Mammary epithelial cell (primary cell): ENCODE measurements at regions of chr9 and their contacts with region 1.

Region 1: DNA sequence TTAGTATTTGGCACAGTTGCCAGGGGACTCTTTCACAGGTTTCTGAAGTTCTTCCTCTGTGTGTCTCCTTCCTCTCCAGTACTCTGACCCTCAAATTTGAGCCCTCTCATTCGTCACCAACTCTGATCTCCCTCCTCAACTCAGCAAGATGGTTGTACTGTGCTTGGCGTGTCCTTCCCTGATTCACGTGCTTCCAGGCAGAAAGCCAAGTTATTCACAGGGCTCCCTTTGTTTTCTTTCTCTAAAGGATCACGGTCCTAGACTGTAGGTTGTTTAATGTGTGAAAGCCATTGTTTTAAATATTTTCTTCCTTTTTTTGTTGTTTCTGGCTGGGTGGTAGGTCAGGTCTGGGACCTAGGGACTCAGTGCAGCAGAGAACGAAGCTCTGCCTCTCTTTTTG is 142.9 kb downstream of the DMAC1 start:
- DNase-seq: peak; percentile 12
- H3K4me3 ChIP-seq: no peak overlapping the region
- H3K27ac ChIP-seq: no peak overlapping the region
- H3K4me1 ChIP-seq: no peaks in the 10 kb centered on the region
- H3K27me3 ChIP-seq: no peaks in the 10 kb centered on the region
- CTCF ChIP-seq: no peak

Region 2: DNA sequence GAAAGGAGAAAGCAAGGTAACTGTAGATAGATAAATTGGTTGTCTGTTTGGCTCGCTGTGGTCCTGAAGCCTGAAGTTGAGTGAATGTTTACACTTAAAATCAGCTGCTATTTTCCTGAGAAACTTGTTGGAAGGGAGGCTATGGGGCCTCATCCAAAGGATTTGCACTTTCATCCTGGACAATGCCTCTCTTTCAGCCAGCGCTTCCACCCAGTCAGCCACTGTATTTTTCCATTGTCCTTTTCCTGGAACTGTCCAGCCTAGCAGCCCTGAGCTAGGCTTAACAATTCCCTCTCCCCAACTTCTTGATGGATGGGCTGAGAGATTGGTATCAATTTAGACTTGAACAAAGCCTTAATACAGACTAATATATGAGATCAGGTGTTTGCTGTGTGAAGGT is 286.3 kb before region 1 on chr9:
- CTCF ChIA-PET with region 1: no interaction called
- dilution Hi-C with region 1: loop called (anchors 10 kb)
- in situ Hi-C with region 1: no loop called
- intact Hi-C with region 1: no loop called
- DNase-seq: no peak
- H3K4me3 ChIP-seq: no peak overlapping the region
- H3K27ac ChIP-seq: no peak overlapping the region
- H3K4me1 ChIP-seq: no peaks in the 10 kb centered on the region
- H3K27me3 ChIP-seq: no peaks in the 10 kb centered on the region
- CTCF ChIP-seq: no peak

Region 3: GRCh38 chr9:7729371-7730163 is 72.9 kb after region 1 on chr9:
- CTCF ChIA-PET with region 1: no interaction called
- dilution Hi-C with region 1: no loop called
- in situ Hi-C with region 1: no loop called
- intact Hi-C with region 1: no loop called
- DNase-seq: no peak
- H3K4me3 ChIP-seq: no peak overlapping the region
- H3K27ac ChIP-seq: no peak overlapping the region
- H3K4me1 ChIP-seq: no peaks in the 10 kb centered on the region
- H3K27me3 ChIP-seq: no peaks in the 10 kb centered on the region
- CTCF ChIP-seq: no peak